Posterior vena cava (tissue), 2 donors: ENCODE measurements at regions of chr17 and their contacts with region 1.

Region 1: GRCh38 chr17:2566056-2566455 is 27.4 kb upstream of the PAFAH1B1 start:
- DNase-seq: no peak

Region 2: DNA sequence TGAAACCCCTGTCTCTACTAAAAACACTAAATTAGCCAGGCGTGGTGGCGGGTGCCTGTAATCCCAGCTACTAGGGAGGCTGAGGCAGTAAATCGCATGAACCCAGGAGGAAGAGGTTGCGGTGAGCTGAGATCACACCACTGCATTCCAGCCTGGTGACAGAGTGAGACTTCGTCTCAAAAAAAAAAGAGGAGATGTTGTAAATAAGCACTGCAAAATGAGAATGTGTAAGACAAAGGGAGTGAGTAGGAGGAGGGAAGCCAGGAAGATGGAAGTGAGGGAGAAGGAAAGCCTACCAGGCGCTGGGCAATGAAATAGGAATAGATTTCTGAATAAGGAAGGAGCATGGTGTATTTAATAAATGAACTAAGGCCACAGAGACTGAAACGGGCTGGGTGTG is 872.7 kb before region 1 on chr17:
- intact Hi-C with region 1: no loop called
- DNase-seq: no peak

Region 3: DNA sequence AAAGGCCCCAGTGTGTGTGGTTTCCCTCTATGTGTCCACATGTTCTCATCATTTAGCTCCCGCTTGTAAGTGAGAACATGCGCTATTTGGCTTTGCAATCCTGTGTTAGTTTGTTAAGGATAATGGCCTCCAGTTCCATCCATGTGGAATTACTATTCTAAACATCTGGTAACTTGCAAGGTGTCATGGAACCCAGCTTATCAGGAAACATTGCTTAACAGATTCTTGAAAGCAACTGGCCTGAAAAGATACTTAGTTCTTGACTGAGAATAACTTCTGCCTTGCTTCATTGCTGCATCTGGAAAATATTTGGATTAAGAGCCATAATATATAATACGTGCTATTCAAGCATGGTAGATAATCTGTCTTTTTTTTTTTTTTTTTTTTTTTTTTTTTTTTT is 55.2 kb after region 1 on chr17:
- intact Hi-C with region 1: loop called in 1 of 2 experiments (anchors 2 kb)
- DNase-seq: no peak